ENCODE measurements at regions of chr6 and their contacts with region 1.

Region 1: DNA sequence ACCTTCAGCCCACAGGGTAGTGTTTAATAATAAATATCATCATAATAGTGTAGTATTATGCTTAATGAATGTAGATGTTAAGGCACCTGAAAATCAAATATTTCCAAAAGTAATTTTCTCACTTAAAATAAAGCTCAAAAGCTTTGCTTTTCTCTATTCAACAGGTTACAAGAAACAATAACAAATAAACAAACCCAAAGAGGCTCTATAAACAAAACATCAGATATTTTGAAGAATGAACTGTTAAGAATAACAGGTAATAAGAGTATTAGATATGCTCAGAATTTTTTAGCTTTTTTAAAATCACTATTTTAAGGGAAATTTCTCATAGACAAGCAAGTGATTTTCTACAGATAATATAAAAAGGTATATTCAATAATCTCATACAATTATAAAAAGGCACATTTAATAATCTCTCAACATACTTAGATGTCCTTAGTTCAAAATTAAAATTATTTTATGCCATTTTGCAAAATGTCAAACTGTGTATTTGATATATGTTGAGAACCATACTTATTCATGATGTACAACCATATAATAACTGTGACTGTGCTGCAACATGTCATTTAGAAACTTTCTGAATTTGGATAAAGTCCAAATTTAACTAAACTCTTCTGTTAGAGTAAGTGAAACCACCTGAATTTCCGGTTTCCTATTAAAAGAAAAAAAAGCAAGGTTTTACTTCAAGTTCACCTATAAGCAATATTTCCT is 35.8 kb downstream of the PHIP start:
- DNase-seq: no peak
- H3K4me3 ChIP-seq: no peak overlapping the region
- H3K27ac ChIP-seq: no peak overlapping the region
- H3K4me1 ChIP-seq: peaks cover 11% of the 10 kb centered on the region
- CTCF ChIP-seq: no peak

Region 2: GRCh38 chr6:78999737-79000136 is 42.5 kb before region 1 on chr6:
- CTCF ChIA-PET with region 1: no interaction called
- POLR2A ChIA-PET with region 1: no interaction called
- intact Hi-C with region 1: no loop called
- DNase-seq: no peak
- H3K4me3 ChIP-seq: no peak overlapping the region
- H3K27ac ChIP-seq: no peak overlapping the region
- H3K4me1 ChIP-seq: no peaks in the 10 kb centered on the region
- CTCF ChIP-seq: no peak

Region 3: GRCh38 chr6:79062708-79063107 is 20.5 kb after region 1 on chr6:
- CTCF ChIA-PET with region 1: no interaction called
- POLR2A ChIA-PET with region 1: interaction called, 14 read pairs
- intact Hi-C with region 1: no loop called
- DNase-seq: no peak
- H3K4me3 ChIP-seq: no peak overlapping the region
- H3K27ac ChIP-seq: no peak overlapping the region
- H3K4me1 ChIP-seq: peaks cover 8% of the 10 kb centered on the region
- CTCF ChIP-seq: no peak

Region 4: GRCh38 chr6:79127660-79128059 is 85.4 kb after region 1 on chr6:
- CTCF ChIA-PET with region 1: no interaction called
- POLR2A ChIA-PET with region 1: no interaction called
- intact Hi-C with region 1: no loop called
- DNase-seq: no peak
- H3K4me3 ChIP-seq: no peak overlapping the region
- H3K27ac ChIP-seq: no peak overlapping the region
- H3K4me1 ChIP-seq: no peaks in the 10 kb centered on the region
- CTCF ChIP-seq: 0 out of 2 replicates have a peak, but pooled peaks have one; percentile 18